Right cardiac atrium (tissue), 5 donors: ENCODE measurements at regions of chr22 and their contacts with region 1.

Region 1: DNA sequence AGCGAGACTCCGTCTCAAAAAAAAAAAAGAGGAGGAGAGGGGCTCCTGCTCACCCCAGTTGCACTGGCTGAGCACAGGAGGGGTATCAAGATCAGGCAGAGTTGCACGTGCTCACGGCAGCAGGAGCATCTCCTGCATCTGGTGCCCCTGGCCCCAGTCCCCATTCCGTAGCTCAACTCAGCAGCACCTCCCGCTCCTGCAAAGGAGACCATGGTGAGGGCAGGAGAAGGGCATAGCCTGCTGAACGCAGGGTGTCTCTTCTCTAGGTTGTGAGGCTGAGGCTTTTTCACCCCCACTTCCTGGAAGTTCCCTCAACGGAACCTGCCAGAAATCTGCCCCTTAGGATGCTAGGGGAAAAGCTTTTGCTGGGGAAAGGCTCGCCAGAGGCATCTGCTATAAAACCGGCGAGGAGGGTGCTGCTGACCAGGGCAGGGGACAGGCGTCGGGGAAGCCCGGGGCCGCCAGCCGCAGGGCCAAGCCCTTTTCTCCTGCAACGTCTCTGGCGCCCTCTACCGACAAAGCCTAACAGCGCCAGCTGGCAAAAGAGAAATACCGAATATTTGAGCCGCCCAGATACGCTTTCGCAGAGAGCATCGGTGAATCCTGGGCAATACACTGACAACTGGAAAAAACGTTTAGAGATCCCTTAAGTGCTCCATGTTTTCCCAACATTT is 1.0 kb upstream of the PPP6R2 start:
- DNase-seq: peak; percentile 90 to 96 (median 95)
- ATAC-seq: peak; percentile 82 to 83
- H3K4me3 ChIP-seq: peak overlapping the region; percentile 96
- H3K27ac ChIP-seq: no peak overlapping the region
- H3K4me1 ChIP-seq: peaks cover 3% of the 10 kb centered on the region
- H3K27me3 ChIP-seq: no peaks in the 10 kb centered on the region

Region 2: GRCh38 chr22:50244420-50245213 is 97.5 kb before region 1 on chr22 and contains the start of gene TUBGCP6:
- intact Hi-C with region 1: loop called in 1 of 4 experiments (anchors 5 kb)
- DNase-seq: peak; percentile 96 to 99 (median 98)
- ATAC-seq: peak; percentile 92 to 93
- H3K4me3 ChIP-seq: peak within 1 kb of the TSS; percentile 87
- H3K27ac ChIP-seq: peak within 1 kb of the TSS; percentile 86
- H3K4me1 ChIP-seq: no peaks in the 10 kb centered on the region
- H3K27me3 ChIP-seq: no peaks in the 10 kb centered on the region
- total RNA-seq, gene TUBGCP6: 20.6 to 22.8 (median 22.6) TPM

Region 3: DNA sequence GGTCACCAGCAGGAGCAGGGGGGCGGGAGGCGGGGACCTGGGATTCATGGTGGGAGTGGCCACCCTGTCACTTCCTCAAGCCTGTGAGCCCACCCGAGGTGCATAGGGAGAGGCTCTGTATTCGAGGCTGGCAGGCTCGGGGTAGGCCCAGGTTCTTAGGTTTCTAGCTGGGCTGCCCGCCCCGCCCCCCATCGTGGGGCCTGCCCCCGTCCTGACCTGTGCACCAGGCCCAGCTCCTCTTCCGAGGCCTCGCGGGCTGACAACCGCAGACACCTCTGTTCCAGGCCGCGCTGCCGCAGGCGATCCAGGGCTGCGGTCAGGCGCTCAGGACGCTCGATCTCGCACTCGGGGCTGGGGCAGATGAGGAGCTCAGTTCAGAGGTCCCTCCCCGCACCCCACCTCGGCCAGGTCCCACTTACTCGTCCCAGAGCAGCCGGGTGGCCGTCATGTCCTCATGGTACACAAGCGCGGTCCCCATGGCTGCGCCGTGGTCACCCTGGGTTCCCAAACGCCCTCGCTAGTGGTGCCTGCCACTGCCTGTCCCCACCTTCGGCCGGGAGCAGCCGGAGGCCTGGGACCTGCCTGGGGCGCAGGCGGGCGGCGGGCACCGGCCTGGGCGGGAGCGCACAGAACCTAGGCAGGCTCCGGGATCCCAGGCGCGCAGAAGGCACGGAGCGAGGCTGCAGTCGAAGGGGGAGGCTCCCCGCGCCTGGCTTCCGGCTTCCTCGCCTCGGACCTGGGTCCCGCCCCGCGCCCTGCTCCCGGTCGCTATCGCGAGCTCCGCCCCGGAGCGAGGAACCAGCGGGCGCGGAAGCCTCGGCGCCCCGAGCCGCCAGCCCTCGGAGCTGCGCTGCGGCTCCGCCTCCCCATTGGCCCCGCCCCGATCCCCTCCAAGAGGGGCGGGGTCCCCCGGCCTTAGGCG is 91.3 kb before region 1 on chr22 and contains the start of gene HDAC10:
- intact Hi-C with region 1: loop called in 3 of 4 experiments (anchors 5 kb)
- DNase-seq: peak; percentile 86 to 95 (median 94)
- ATAC-seq: peak; percentile 79 to 81
- H3K4me3 ChIP-seq: peak within 1 kb of the TSS; percentile 53
- H3K27ac ChIP-seq: no peak within 1 kb of the TSS
- H3K4me1 ChIP-seq: peaks cover 5% of the 10 kb centered on the region
- H3K27me3 ChIP-seq: no peaks in the 10 kb centered on the region
- total RNA-seq, gene HDAC10: 8.7 to 13.5 (median 11.6) TPM

Region 4: DNA sequence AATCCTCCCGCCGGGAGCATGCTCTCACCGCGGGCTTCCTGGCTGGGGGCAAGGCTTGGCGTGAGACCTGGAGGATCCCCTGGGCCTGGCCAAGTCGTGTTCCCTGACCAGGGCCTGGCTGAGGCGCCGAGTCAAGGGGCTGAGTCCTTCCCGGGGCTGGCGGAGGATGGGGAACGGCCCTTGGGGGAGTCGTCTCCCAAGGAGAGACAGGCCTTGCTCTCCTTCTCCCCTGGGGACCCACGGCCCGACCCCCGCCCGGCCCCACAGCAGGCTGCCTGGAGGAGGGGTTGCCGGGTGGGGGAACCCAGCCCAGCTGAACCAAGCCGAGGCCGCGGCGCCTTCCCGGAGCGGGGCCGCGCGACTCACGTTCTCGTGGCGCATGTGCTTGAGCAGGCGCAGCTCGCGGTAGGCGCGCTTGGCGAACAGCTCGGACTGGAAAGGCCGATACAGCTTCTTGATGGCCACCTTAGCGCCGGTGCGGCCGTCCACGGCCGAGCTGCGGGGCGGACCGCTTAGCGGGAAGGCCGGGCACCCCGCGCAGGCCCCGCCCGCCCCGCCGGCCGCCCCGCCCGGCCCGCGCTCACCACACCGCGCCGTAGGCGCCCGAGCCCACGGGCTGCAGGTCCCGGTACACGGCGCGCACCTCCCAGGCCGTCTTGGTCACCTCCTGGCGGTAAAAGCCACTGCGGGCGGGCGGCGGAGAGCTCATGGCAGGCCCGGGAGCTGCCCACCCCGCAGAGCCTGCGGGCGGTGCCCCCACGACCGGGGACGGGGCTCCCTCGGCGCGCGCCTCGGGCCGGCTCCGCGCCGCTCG is 81.1 kb before region 1 on chr22:
- intact Hi-C with region 1: loop called in 1 of 4 experiments (anchors 5 kb)
- DNase-seq: peak in 2 of 3 donors; percentile 54 to 83
- ATAC-seq: peak; percentile 3 to 4
- H3K4me3 ChIP-seq: peak overlapping the region; percentile 68
- H3K27ac ChIP-seq: peak overlapping the region; percentile 42
- H3K4me1 ChIP-seq: no peaks in the 10 kb centered on the region
- H3K27me3 ChIP-seq: no peaks in the 10 kb centered on the region

Region 5: DNA sequence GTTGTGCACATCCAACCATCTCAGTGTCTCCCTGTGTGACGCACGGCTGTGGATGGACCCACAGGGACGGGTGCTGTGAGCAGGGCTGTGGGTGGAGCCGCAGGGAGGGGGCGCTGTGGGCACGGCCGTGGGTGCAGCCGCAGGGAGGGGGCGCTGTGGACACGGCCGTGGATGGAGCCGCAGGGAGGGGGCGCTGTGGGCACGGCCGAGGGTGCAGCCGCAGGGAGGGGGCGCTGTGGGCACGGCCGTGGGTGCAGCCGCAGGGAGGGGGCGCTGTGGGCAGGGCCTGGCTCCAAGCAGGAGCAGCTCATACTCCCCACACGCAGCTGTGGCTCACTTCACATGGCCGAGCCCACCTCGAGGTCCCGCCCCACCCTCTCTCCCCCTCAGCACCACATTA is 66.0 kb before region 1 on chr22:
- intact Hi-C with region 1: loop called in 1 of 4 experiments (anchors 5 kb)
- DNase-seq: peak; percentile 67 to 90 (median 88)
- ATAC-seq: peak; percentile 73 to 82
- H3K4me3 ChIP-seq: no peak overlapping the region
- H3K27ac ChIP-seq: no peak overlapping the region
- H3K4me1 ChIP-seq: no peaks in the 10 kb centered on the region
- H3K27me3 ChIP-seq: no peaks in the 10 kb centered on the region